ENCODE measurements at regions of chr6 and their contacts with region 1.

Region 1: DNA sequence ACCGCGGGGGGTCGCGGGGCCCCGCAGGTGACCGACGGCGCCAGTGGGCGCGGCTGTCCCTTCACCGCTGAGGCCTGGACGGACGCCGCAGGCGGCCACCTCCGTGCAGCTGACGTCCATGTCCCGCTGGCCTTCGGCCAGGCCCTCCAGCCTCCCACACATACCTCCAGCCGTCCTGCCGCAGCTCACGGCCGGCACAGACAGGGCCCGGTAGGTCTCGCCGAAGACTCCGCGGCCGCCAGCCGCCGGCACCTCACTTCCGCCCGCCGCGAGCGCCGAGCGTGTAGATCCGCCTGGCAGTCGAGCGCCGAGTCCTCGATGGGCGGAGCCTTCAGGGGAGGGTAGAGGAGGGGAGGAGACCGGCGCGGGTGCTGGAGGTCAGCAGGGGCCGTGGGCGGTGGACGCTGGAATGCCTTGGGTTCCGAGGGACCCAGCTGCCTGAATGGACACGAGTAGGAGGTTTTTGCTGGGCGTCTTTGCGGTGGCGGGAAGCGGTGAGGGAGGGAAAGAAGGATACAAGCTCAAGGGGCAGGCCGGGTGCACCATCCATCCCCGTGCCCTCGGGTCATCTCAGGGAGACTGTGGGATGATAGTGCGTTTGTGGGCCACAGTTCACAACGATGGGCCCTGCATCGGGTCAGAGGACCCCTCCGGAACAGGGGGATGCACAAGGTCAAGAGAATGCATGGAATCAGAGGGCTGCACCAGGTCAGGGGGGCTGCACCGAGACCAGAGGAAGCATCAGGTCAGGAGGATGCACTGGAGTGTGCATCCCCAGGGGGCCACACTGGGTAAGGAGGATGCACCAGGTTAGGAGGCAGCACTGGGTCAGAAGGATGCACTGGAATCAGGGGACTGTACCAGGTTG is at the start of gene EXOC2:
- DNase-seq: peak; percentile 90
- H3K4me3 Mint-ChIP-seq: peak within 1 kb of the TSS; percentile 92
- H3K27ac Mint-ChIP-seq: peak within 1 kb of the TSS; percentile 90
- H3K4me1 Mint-ChIP-seq: peaks cover 35% of the 10 kb centered on the region
- H3K27me3 Mint-ChIP-seq: no peaks in the 10 kb centered on the region
- total RNA-seq, gene EXOC2: 31.9 to 35.7 TPM

Region 2: DNA sequence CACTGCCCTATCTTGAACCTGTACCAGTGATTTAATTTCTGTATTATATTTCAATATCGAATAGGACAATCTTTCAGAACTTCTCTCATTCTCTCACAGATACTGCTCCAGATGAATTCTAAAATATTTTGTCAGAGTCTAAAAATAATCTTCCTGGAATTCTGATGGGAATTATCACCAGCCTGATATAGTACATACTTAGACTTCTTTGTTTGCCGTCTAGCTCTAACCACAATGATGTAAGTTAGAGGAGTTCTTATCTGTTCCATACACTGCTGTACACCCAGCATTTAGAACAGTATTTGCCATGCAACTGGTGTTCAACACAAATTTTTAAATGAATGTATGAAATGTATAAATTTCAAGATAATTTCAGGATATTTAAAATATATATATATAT is 34.8 kb before region 1 on chr6:
- CTCF ChIA-PET with region 1: no interaction called
- POLR2A ChIA-PET with region 1: no interaction called
- DNase-seq: no peak
- H3K4me3 Mint-ChIP-seq: no peak overlapping the region
- H3K27ac Mint-ChIP-seq: no peak overlapping the region
- H3K4me1 Mint-ChIP-seq: peaks cover 20% of the 10 kb centered on the region
- H3K27me3 Mint-ChIP-seq: no peaks in the 10 kb centered on the region

Region 3: DNA sequence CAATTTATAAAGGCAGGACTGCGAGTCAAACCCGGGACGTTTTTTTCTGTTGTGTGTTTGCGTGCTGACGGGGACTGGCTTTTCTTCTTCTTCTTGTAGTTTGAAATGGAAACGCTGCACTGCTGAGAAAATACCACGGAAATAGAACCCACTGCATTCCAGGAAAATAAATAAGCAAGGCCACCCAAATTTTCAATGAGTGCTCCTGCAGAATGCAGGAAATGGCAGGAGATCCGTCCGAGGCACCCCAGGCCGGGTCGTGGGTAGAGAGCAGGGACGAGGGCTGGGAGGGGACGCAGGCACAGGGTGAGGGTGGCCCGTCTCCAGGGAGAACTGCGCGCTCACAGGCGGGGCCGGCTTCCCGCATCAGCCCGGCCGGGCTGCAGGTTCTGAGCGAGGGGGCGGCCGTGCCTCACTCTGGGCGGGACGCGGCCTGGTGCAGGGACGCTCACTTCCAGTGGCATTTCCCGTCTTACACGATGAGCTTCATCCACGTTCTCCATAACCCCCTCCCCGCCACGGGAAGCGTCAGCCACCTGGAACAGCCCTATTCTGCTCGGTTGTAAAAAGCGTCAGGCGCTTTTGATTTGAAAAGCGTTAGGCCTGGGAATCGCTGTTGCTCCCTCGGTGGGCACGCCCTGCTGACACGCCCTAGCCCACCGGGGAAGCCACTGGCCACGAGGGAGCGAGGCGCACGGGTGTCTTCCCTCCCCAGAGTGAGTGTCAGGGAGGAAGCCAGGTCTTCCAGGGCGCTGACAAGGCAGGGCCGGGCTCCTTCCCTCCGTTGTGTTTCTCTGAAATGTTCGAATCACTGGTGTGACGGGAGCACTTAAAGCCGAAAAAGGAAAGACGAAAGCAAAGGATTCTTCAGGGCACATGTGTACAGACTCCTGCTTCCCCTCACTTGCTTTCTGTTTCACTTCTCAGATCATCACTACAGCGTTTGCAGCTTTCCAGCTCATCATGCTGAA is 17.8 kb after region 1 on chr6:
- CTCF ChIA-PET with region 1: interaction called, 14 read pairs
- POLR2A ChIA-PET with region 1: interaction called, 39 read pairs
- DNase-seq: peak; percentile 68
- H3K4me3 Mint-ChIP-seq: peak overlapping the region; percentile 94
- H3K27ac Mint-ChIP-seq: peak overlapping the region; percentile 99
- H3K4me1 Mint-ChIP-seq: peaks cover 48% of the 10 kb centered on the region
- H3K27me3 Mint-ChIP-seq: peaks cover 4% of the 10 kb centered on the region